Esophagus muscularis mucosa (tissue), 4 donors: ENCODE measurements at regions of chr13 and their contacts with region 1.

Region 1: DNA sequence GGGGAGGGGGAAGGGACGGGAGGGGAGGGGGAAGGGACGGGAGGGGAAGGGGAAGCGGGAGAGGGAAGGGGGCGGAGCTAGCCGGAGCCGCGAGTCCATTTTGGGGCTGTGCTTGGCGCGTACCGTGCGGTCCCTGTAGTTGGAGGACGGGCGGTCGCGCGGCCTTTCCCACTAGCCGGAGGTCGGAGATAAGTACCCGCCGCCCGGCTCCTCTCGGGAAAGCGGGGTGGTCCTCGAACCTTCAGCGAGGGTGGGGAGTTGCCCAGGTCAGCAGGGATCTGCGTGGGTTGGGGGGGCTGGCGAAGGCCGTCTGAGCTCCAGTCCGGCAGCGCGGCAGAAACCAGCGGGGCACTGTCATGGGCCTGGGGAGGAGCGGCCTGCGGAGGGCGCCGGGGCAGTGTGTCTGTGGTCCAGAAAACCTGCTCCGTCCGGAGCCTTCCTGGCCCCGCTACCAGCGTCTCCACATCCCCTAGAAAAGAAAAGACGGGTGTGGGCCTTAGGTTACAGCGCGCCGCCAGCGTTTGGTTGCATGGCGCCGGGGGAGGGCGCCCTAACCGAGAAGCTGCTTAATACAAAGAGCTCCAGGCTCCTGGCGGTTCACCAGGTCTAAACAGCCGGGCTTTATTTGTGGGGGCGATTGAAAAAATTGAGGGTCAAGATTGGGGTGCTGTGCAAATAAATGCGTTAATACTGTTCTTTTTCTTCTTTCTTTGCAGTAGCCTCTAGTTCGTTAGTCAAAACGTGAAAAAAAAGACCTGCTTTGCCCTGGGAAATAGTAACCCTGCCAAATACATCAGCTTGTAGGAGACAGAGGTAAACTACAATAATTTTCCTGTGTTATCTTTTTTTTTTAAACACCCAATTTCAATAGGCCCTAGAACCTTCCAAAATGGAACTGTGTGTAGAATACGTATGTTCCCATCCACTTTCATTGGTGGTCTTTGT is at the start of gene TRIM13:
- DNase-seq: peak; percentile 97
- H3K4me3 ChIP-seq: peak within 1 kb of the TSS; percentile 86 to 96 (median 94)
- H3K27ac ChIP-seq: peak within 1 kb of the TSS; percentile 99
- H3K4me1 ChIP-seq: peaks cover 45 to 54% (median 52%) of the 10 kb centered on the region in 4 donors
- H3K27me3 ChIP-seq: no peaks in the 10 kb centered on the region
- CTCF ChIP-seq: peak; percentile 70 to 82 (median 72)
- EP300 ChIP-seq: no peak
- POLR2A ChIP-seq: peak; percentile 68
- total RNA-seq, gene TRIM13: 21.4 to 38.6 (median 34.8) TPM

Region 2: GRCh38 chr13:50123862-50124536 is 126.8 kb after region 1 on chr13:
- intact Hi-C with region 1: loop called (anchors 2 kb)
- DNase-seq: peak; percentile 99
- H3K4me3 ChIP-seq: peak overlapping the region; percentile 79 to 99 (median 89)
- H3K27ac ChIP-seq: peak overlapping the region; percentile 95 to 100 (median 100)
- H3K4me1 ChIP-seq: peaks cover 17 to 65% (median 57%) of the 10 kb centered on the region in 4 donors
- H3K27me3 ChIP-seq: peaks cover 0 to 17% (median 6%) of the 10 kb centered on the region in 4 donors
- CTCF ChIP-seq: no peak
- EP300 ChIP-seq: no peak
- POLR2A ChIP-seq: peak; percentile 82

Region 3: GRCh38 chr13:50911937-50912795 is 914.9 kb after region 1 on chr13:
- intact Hi-C with region 1: loop called (anchors 5 kb)
- DNase-seq: no peak
- H3K4me3 ChIP-seq: no peak overlapping the region
- H3K27ac ChIP-seq: peak overlapping the region; percentile 7 to 91 (median 66)
- H3K4me1 ChIP-seq: peaks cover 54 to 70% (median 62%) of the 10 kb centered on the region in 4 donors
- H3K27me3 ChIP-seq: no peaks in the 10 kb centered on the region
- CTCF ChIP-seq: peak; percentile 80 to 89 (median 89)
- EP300 ChIP-seq: no peak
- POLR2A ChIP-seq: no peak